Caco-2 (cell line): ENCODE measurements at regions of chr13 and their contacts with region 1.

Region 1: GRCh38 chr13:38686577-38687245 is at the start of gene FREM2:
- DNase-seq: peak; percentile 93 to 94
- H3K4me3 ChIP-seq: peak within 1 kb of the TSS; percentile 82
- H3K4me3 Mint-ChIP-seq: peak within 1 kb of the TSS; percentile 92
- H3K27ac Mint-ChIP-seq: peak within 1 kb of the TSS; percentile 50
- H3K4me1 ChIP-seq: peaks cover 25% of the 10 kb centered on the region
- H3K4me1 Mint-ChIP-seq: peaks cover 6% of the 10 kb centered on the region
- H3K27me3 ChIP-seq: no peaks in the 10 kb centered on the region
- H3K27me3 Mint-ChIP-seq: no peaks in the 10 kb centered on the region
- CTCF ChIP-seq: no peak
- total RNA-seq, gene FREM2: 35.5 and 42.6 TPM in 2 replicates

Region 2: GRCh38 chr13:38636772-38637171 is 49.9 kb before region 1 on chr13:
- CTCF ChIA-PET with region 1: interaction called, 6 read pairs
- POLR2A ChIA-PET with region 1: no interaction called
- intact Hi-C with region 1: loop called (anchors 1 kb)
- DNase-seq: peak; percentile 77 to 84
- H3K4me3 ChIP-seq: no peak overlapping the region
- H3K4me3 Mint-ChIP-seq: peak overlapping the region; percentile 56
- H3K27ac Mint-ChIP-seq: peak overlapping the region; percentile 49
- H3K4me1 ChIP-seq: peaks cover 54% of the 10 kb centered on the region
- H3K4me1 Mint-ChIP-seq: peaks cover 47% of the 10 kb centered on the region
- H3K27me3 ChIP-seq: no peaks in the 10 kb centered on the region
- H3K27me3 Mint-ChIP-seq: no peaks in the 10 kb centered on the region
- CTCF ChIP-seq: no peak

Region 3: DNA sequence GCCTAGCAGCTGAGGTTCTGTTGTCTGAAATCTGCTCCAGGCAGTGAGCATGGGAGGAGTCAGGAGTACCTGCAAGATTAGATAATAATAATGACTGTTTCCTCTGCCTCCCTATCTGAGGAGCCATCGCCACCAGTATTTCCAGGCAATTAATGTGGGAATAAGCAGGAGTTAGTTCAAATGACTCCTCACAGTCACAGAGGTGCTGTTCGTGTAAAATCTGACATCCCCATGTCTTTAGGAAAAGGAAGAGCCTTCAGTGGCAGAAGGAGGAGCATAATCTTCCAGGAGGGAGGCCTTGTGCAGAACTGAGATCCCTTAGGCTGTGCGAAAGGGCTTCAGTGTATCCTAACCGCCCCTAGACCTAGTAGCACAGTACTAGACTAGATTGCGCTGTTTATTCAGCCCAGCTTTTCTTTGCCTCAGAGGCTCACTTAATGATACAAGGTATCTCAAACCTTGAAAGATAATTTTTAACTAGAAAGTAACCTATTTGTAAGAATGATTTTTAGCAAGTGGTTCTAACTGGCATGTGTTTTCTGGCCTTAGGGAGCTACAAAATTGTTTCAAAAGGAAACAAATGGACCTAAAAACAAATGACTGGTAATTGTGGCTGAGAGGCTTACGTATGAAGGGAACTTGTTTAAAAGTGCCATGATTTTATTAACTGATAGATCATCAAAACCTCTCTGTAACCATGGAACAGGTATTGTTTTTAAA is 49.2 kb after region 1 on chr13:
- CTCF ChIA-PET with region 1: no interaction called
- POLR2A ChIA-PET with region 1: no interaction called
- intact Hi-C with region 1: loop called (anchors 1 kb)
- DNase-seq: peak in 1 of 2 experiments; percentile 16
- H3K4me3 ChIP-seq: no peak overlapping the region
- H3K4me3 Mint-ChIP-seq: no peak overlapping the region
- H3K27ac Mint-ChIP-seq: no peak overlapping the region
- H3K4me1 ChIP-seq: peaks cover 21% of the 10 kb centered on the region
- H3K4me1 Mint-ChIP-seq: peaks cover 15% of the 10 kb centered on the region
- H3K27me3 ChIP-seq: no peaks in the 10 kb centered on the region
- H3K27me3 Mint-ChIP-seq: no peaks in the 10 kb centered on the region
- CTCF ChIP-seq: no peak

Region 4: DNA sequence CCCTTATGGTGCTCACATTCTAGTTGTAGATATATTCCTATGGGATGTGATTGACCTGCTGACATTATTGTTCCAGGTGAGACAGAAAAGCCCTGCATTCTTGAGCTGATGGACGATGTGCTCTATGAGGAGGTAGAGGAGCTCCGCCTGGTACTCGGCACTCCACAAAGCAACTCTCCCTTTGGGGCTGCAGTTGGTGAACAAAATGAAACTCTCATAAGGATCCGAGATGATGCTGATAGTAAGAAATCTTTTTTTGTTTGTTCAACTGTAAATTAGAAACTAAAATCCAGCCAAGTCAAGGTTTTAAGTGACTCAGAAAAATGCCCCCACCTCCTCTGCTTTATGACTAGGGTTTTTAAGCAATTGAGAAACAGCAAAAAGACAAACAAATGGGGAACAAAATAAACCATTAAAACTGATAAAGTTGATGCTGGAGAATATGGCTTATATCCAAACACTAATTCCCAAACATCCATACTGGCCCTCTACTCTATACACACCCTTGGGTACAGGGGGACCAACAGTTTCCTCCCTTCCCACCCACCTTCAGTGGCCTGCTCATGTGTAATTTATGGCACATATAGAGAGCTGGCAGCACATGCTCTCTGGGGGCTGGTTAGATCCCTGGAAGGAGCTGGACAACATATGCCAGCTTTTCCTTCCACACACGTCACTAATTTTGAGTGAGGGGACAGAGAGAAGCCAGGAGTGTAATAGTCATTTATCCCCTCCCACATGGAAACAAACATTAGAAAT is 164.3 kb after region 1 on chr13:
- CTCF ChIA-PET with region 1: no interaction called
- POLR2A ChIA-PET with region 1: no interaction called
- intact Hi-C with region 1: loop called (anchors 5 kb)
- DNase-seq: peak; percentile 57 to 63
- H3K4me3 ChIP-seq: no peak overlapping the region
- H3K4me3 Mint-ChIP-seq: no peak overlapping the region
- H3K27ac Mint-ChIP-seq: peak overlapping the region; percentile 53
- H3K4me1 ChIP-seq: peaks cover 4% of the 10 kb centered on the region; the same call in 1 of the 2 replicates
- H3K4me1 Mint-ChIP-seq: peaks cover 11% of the 10 kb centered on the region
- H3K27me3 ChIP-seq: no peaks in the 10 kb centered on the region
- H3K27me3 Mint-ChIP-seq: no peaks in the 10 kb centered on the region
- CTCF ChIP-seq: no peak

Region 5: GRCh38 chr13:38914070-38914469 is 227.4 kb after region 1 on chr13:
- CTCF ChIA-PET with region 1: interaction called, 3 read pairs
- POLR2A ChIA-PET with region 1: no interaction called
- intact Hi-C with region 1: loop called (anchors 1 kb)
- DNase-seq: no peak
- H3K4me3 ChIP-seq: no peak overlapping the region
- H3K4me3 Mint-ChIP-seq: no peak overlapping the region
- H3K27ac Mint-ChIP-seq: no peak overlapping the region
- H3K4me1 ChIP-seq: peaks cover 5% of the 10 kb centered on the region
- H3K4me1 Mint-ChIP-seq: peaks cover 6% of the 10 kb centered on the region
- H3K27me3 ChIP-seq: no peaks in the 10 kb centered on the region
- H3K27me3 Mint-ChIP-seq: peaks cover 4% of the 10 kb centered on the region
- CTCF ChIP-seq: no peak